ENCODE measurements at regions of chr15 and their contacts with region 1.

Region 1: GRCh38 chr15:95659656-95660055 is 670.8 kb upstream of the NR2F2 start:
- DNase-seq: peak in 4 of 5 donors; percentile 40 to 52 (median 51)
- ATAC-seq: peak in 2 of 4 donors; percentile 71
- H3K4me3 ChIP-seq: no peak overlapping the region
- H3K27ac ChIP-seq: peak overlapping the region in 10 of 12 donors; percentile 6 to 69 (median 52)
- H3K4me1 ChIP-seq: peaks cover 0 to 3% (median 0%) of the 10 kb centered on the region in 12 donors
- H3K27me3 ChIP-seq: no peaks in the 10 kb centered on the region
- CTCF ChIP-seq: no peak
- POLR2A ChIP-seq: no peak

Region 2: GRCh38 chr15:94749811-94750617 is 909.6 kb before region 1 on chr15:
- intact Hi-C with region 1: loop called in 1 of 10 experiments (anchors 10 kb)
- DNase-seq: peak in 1 of 5 donors; percentile 7
- ATAC-seq: peak in 2 of 4 donors; percentile 74 to 81
- H3K4me3 ChIP-seq: no peak overlapping the region
- H3K27ac ChIP-seq: peak overlapping the region in 3 of 12 donors; percentile 26 to 39 (median 29)
- H3K4me1 ChIP-seq: peaks cover 0 to 7% (median 0%) of the 10 kb centered on the region in 12 donors
- H3K27me3 ChIP-seq: no peaks in the 10 kb centered on the region
- CTCF ChIP-seq: no peak
- POLR2A ChIP-seq: no peak